Left cardiac atrium (tissue), 4 donors: ENCODE measurements at regions of chrX and their contacts with region 1.

Region 1: DNA sequence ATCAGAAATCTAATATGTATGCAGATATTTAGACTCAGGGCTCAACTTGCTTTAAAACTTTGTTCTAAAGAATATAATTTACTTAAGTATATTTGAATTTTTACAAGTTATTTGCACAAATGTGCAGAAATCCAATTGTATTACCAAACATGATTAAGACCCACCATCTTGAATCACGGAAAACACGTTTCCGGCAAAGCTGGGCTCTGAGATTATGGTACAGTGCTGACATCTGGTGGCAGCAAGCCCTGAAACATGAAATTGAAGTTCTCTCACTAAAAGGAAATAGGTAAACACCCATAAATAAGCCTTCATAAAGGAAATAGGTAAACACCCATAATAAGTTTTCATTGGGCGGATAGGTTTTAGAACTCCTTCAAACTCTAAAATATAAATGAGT is 98.3 kb upstream of the MAOA start:
- DNase-seq: peak; percentile 52
- ATAC-seq: peak in 1 of 2 donors; percentile 39

Region 2: DNA sequence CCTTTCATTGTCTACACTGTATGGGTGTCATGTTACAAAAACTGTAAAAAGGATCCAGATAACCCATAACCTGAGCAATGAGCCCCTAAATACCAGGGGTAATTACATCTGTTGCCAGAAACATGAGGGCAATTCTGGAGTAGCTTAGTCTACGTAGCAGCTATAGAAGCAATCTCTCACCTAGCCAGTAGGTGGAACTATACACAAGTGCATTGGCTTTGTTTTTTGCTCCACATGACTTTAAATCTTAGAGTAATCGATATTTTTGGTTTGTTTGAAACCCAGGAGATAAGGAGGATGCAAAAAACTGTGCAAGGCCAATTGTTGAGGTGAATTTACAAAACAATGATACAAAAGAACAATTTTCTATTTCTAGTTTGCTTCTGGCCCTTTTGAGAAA is 1776.3 kb before region 1 on chrX:
- intact Hi-C with region 1: loop called in 1 of 2 experiments (anchors 5 kb)
- DNase-seq: no peak
- ATAC-seq: no peak

Region 3: DNA sequence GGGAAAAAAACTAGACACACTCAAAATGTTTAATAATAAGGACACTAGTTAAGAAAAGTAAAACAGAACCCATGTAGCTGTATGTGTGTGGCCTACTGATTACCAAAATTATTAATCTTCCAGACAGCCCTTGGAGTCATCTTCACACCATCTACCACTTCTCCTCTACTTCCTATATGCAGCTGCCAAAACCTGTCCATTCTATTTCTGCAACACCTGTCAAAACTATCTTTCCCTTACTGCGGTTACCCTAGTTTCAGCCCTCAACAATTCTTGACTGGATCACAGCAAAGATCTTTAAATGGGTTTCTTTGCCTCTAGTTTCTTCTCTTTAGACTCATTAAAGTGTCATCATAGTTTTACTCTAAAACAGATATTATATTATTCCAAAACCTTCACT is 1761.2 kb before region 1 on chrX:
- intact Hi-C with region 1: loop called in 1 of 2 experiments (anchors 5 kb)
- DNase-seq: no peak
- ATAC-seq: no peak

Region 4: GRCh38 chrX:42680666-42681065 is 877.1 kb before region 1 on chrX:
- intact Hi-C with region 1: loop called in 1 of 2 experiments (anchors 10 kb)
- DNase-seq: peak; percentile 22
- ATAC-seq: peak; percentile 49 to 57

Region 5: GRCh38 chrX:43750248-43750676 is 192.5 kb after region 1 on chrX:
- intact Hi-C with region 1: loop called (anchors 1 to 5 kb)
- DNase-seq: peak; percentile 31
- ATAC-seq: peak; percentile 77 to 91